Activated CD4-positive, alpha-beta T cell treated with anti-CD3 and anti-CD28 coated beads for 36 hours (primary cell): ENCODE measurements at regions of chr10 and their contacts with region 1.

Region 1: DNA sequence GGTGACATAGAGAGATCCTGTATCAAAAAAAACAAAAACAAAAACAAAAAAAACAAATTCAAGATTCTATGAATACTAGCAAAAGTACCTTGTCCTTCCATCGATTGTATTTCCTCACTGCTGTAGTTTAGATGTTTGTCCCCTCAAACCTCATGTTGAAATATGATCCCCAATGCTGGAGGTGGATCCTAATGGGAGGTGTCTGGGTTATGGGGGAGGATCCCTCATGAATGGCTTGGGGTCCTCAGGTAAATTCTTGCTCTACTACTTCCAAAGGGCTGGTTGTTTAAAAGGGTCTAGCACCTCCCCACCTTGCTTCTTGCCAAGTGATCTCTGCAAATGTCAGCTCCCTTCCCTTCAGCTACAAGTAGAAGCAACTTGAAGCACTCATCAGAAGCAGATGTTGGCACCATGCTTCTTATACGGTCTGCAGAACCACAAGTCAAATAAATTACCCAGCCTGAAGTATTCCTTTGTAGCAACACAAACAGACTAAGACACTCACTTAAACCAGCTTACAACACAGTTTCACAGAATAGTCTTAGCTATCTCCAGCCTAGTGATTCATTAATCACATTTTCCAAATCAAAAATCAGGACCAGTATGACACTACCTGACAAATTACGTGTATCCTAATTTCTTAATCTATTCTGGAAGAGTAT is 20.7 kb downstream of the ABI1 start:
- DNase-seq: no peak
- ATAC-seq: peak; percentile 69
- H3K4me3 Mint-ChIP-seq: no peak overlapping the region
- H3K27ac Mint-ChIP-seq: peak overlapping the region; percentile 8
- H3K4me1 Mint-ChIP-seq: peaks cover 63% of the 10 kb centered on the region
- H3K27me3 Mint-ChIP-seq: no peaks in the 10 kb centered on the region

Region 2: GRCh38 chr10:26780793-26781601 is 59.1 kb before region 1 on chr10:
- CTCF ChIA-PET with region 1: no interaction called
- POLR2A ChIA-PET with region 1: no interaction called
- intact Hi-C with region 1: loop called (anchors 5 to 10 kb)
- DNase-seq: peak; percentile 63
- ATAC-seq: peak; percentile 81
- H3K4me3 Mint-ChIP-seq: peak overlapping the region; percentile 23
- H3K27ac Mint-ChIP-seq: peak overlapping the region; percentile 92
- H3K4me1 Mint-ChIP-seq: peaks cover 82% of the 10 kb centered on the region
- H3K27me3 Mint-ChIP-seq: no peaks in the 10 kb centered on the region

Region 3: DNA sequence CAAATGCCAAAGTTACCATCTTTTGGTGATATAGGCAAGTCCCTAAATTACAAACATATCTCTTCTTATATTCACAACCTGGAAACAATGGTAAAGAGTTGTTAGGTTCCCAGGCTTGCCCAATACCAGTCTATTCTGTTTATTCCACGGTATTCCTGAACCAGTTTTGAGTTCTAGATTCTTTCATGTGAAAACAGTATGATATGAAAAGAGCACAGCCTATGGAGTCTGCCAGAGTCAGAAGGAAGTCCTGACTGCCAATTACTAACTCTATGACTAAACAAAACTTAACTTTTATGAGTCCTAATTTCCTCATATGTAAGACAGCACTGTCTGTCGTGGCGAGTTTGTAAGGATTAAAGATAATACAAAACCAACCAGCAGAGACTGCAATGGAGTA is 15.1 kb after region 1 on chr10:
- CTCF ChIA-PET with region 1: interaction called, 3 read pairs
- POLR2A ChIA-PET with region 1: interaction called, 8 read pairs
- intact Hi-C with region 1: loop called (anchors 2 kb)
- DNase-seq: no peak
- ATAC-seq: peak; percentile 63
- H3K4me3 Mint-ChIP-seq: no peak overlapping the region
- H3K27ac Mint-ChIP-seq: no peak overlapping the region
- H3K4me1 Mint-ChIP-seq: peaks cover 54% of the 10 kb centered on the region
- H3K27me3 Mint-ChIP-seq: no peaks in the 10 kb centered on the region